PC-3 (cell line): ENCODE measurements at regions of chr7 and their contacts with region 1.

Region 1: GRCh38 chr7:5526100-5526905 is 102.7 kb upstream of the TNRC18 start:
- DNase-seq: peak; percentile 33
- ATAC-seq: peak; percentile 6
- H3K4me3 ChIP-seq: no peak overlapping the region
- H3K27ac ChIP-seq: no peak overlapping the region
- H3K4me1 ChIP-seq: peaks cover 17% of the 10 kb centered on the region
- H3K27me3 ChIP-seq: no peaks in the 10 kb centered on the region
- CTCF ChIP-seq: no peak

Region 2: DNA sequence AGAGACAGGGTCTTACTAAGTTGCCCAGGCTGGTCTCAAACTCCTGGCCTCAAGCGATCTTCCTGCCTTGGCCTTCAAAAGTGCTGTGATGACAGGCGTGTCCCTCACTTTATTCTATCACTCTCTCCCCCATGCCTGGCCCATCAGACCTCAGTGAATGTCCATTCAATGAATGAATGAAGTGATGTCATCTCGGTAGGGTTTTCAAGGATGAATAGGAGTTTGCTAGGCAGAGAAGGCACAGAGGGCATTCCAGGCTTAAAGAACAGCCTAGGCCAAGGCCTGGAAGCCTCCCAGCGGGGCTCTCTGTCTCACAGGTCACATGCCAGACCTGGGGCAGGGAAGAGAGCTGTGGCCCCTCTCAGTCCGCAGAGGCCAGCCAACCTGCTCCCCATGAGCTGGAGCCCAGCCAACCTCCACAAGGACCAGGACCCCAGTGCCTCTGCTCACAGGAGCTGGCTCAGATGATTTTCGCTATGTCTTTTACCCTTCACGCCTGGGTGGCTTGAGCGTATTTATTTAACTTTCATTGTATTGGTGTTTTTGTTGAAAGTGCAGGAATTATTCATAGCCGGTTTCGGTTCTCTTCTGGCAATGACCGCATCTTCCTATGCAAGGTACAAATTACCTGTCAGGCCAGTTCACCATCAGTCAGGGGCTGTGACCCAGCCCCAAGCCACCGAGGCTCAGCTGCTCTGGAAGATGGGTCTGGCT is 90.9 kb before region 1 on chr7:
- CTCF ChIA-PET with region 1: no interaction called
- POLR2A ChIA-PET with region 1: no interaction called
- intact Hi-C with region 1: no loop called
- DNase-seq: no peak
- ATAC-seq: no peak
- H3K4me3 ChIP-seq: no peak overlapping the region
- H3K27ac ChIP-seq: no peak overlapping the region
- H3K4me1 ChIP-seq: peaks cover 2% of the 10 kb centered on the region; the same call in 1 of the 2 replicates
- H3K27me3 ChIP-seq: no peaks in the 10 kb centered on the region
- CTCF ChIP-seq: no peak

Region 3: GRCh38 chr7:5472432-5473315 is 53.6 kb before region 1 on chr7:
- CTCF ChIA-PET with region 1: no interaction called
- POLR2A ChIA-PET with region 1: no interaction called
- intact Hi-C with region 1: no loop called
- DNase-seq: no peak
- ATAC-seq: peak; percentile 18; the same call in 1 of the 2 replicates
- H3K4me3 ChIP-seq: no peak overlapping the region
- H3K27ac ChIP-seq: no peak overlapping the region
- H3K4me1 ChIP-seq: no peaks in the 10 kb centered on the region
- H3K27me3 ChIP-seq: no peaks in the 10 kb centered on the region
- CTCF ChIP-seq: no peak

Region 4: GRCh38 chr7:5502721-5503243 is 23.5 kb before region 1 on chr7:
- CTCF ChIA-PET with region 1: no interaction called
- POLR2A ChIA-PET with region 1: interaction called, 16 read pairs
- intact Hi-C with region 1: no loop called
- DNase-seq: no peak
- ATAC-seq: no peak
- H3K4me3 ChIP-seq: no peak overlapping the region
- H3K27ac ChIP-seq: no peak overlapping the region
- H3K4me1 ChIP-seq: peaks cover 4% of the 10 kb centered on the region; the same call in 1 of the 2 replicates
- H3K27me3 ChIP-seq: no peaks in the 10 kb centered on the region
- CTCF ChIP-seq: no peak

Region 5: DNA sequence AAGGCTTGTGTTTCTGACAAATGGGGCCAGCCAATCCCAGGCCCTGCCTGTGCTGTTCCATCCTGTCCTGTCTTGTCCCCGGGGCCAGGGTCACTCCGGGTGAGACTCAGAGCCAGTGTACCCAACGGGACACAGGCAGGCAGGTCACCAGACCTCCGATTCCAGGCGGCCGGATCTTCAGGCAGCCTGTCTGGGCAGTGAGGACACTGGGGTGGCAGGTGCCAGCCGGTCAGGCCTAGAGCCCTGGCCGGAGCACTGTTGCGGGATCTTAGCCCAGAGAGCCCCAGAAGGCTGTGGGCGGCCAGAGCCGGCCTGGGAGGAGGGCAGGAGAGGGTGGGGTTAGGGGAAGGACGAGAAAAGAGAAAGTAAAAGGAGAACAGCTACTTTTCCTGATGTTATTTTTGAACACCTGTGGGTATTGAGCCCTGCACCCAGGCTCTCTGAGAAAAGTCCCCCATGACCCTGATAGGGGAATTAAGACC is 31.7 kb after region 1 on chr7:
- CTCF ChIA-PET with region 1: no interaction called
- POLR2A ChIA-PET with region 1: no interaction called
- intact Hi-C with region 1: loop called (anchors 1 kb)
- DNase-seq: no peak
- ATAC-seq: no peak
- H3K4me3 ChIP-seq: no peak overlapping the region
- H3K27ac ChIP-seq: no peak overlapping the region
- H3K4me1 ChIP-seq: peaks cover 16% of the 10 kb centered on the region; the same call in 1 of the 2 replicates
- H3K27me3 ChIP-seq: no peaks in the 10 kb centered on the region
- CTCF ChIP-seq: no peak

Region 6: GRCh38 chr7:5596046-5596895 is 70.0 kb after region 1 on chr7:
- CTCF ChIA-PET with region 1: no interaction called
- POLR2A ChIA-PET with region 1: no interaction called
- intact Hi-C with region 1: no loop called
- DNase-seq: peak; percentile 87
- ATAC-seq: peak; percentile 51
- H3K4me3 ChIP-seq: peak overlapping the region; percentile 97
- H3K27ac ChIP-seq: peak overlapping the region; percentile 93
- H3K4me1 ChIP-seq: peaks cover 51% of the 10 kb centered on the region
- H3K27me3 ChIP-seq: no peaks in the 10 kb centered on the region
- CTCF ChIP-seq: no peak